Ascending aorta (tissue), 2 donors: ENCODE measurements at regions of chr3 and their contacts with region 1.

Region 1: GRCh38 chr3:132722164-132723024 is at the start of gene NPHP3:
- DNase-seq: peak; percentile 88 to 98
- H3K4me3 ChIP-seq: peak within 1 kb of the TSS; percentile 85 to 96
- H3K27ac ChIP-seq: peak within 1 kb of the TSS; percentile 93 to 97
- H3K4me1 ChIP-seq: peaks cover 6 to 17% of the 10 kb centered on the region in 2 donors
- H3K27me3 ChIP-seq: no peaks in the 10 kb centered on the region
- CTCF ChIP-seq: no peak
- total RNA-seq, gene NPHP3: 11.9 TPM

Region 2: GRCh38 chr3:132416807-132417694 is 305.3 kb before region 1 on chr3 and contains the start of gene DNAJC13:
- intact Hi-C with region 1: loop called (anchors 1 kb)
- DNase-seq: peak; percentile 73 to 96
- H3K4me3 ChIP-seq: peak within 1 kb of the TSS; percentile 79 to 98
- H3K27ac ChIP-seq: peak within 1 kb of the TSS; percentile 77 to 87
- H3K4me1 ChIP-seq: peaks cover 0 to 15% of the 10 kb centered on the region in 2 donors
- H3K27me3 ChIP-seq: no peaks in the 10 kb centered on the region
- CTCF ChIP-seq: no peak
- total RNA-seq, gene DNAJC13: 29.4 TPM

Region 3: GRCh38 chr3:132659365-132660051 is 62.9 kb before region 1 on chr3 and contains the start of gene ACAD11:
- intact Hi-C with region 1: loop called (anchors 1 kb)
- DNase-seq: peak; percentile 56 to 85
- H3K4me3 ChIP-seq: peak within 1 kb of the TSS; percentile 80 to 81
- H3K27ac ChIP-seq: peak within 1 kb of the TSS; percentile 95 to 98
- H3K4me1 ChIP-seq: peaks cover 0 to 19% of the 10 kb centered on the region in 2 donors
- H3K27me3 ChIP-seq: no peaks in the 10 kb centered on the region
- CTCF ChIP-seq: peak in 2 of 3 experiments; percentile 66 to 67
- total RNA-seq, gene ACAD11: 10.7 TPM

Region 4: GRCh38 chr3:132756108-132756650 is 33.8 kb after region 1 on chr3:
- intact Hi-C with region 1: no loop called
- DNase-seq: no peak
- H3K4me3 ChIP-seq: no peak overlapping the region
- H3K27ac ChIP-seq: no peak overlapping the region
- H3K4me1 ChIP-seq: no peaks in the 10 kb centered on the region
- H3K27me3 ChIP-seq: no peaks in the 10 kb centered on the region
- CTCF ChIP-seq: no peak

Region 5: DNA sequence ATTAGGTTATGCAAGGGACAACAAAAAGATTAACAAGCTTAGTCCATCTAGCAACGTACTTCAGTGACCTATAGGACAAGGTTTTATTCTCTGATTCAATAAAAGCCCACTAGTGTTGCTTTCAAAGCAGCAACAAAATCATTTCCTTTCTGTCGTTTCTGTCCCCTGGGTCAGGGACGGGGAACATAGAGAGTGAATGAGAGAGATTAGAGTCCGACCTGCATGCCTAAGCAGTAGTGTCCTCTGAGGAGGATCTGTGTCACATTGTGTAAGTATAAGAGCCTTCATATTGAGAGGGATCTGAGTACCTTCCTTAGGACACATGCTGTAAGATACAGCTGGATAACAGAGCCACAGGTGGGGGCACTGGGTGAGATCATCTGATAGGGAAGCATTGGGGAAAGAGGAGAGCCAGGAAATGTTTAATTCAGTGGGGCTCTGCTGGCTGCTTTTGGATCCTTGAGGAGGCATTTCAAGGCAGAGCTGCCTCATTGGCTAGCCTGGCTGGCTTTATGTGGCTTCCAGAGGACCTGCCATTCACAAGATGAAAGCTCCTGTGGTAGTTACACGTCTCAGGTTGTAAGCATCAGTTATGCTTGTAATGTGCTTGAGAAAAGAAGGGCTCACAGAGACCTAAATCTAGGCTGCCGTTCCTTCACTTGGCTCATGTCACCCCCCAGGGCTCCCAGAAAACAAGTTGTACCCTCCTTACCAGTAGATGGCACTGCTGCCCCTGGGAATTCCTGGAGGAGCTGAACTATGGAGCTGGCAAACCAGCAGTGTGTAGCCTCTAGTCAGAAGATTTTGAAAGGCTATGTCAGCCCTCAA is 318.5 kb after region 1 on chr3:
- intact Hi-C with region 1: loop called (anchors 1 kb)
- DNase-seq: peak in 1 of 2 donors; percentile 76
- H3K4me3 ChIP-seq: no peak overlapping the region
- H3K27ac ChIP-seq: peak overlapping the region in 1 of 2 donors; percentile 8
- H3K4me1 ChIP-seq: peaks cover 0 to 2% of the 10 kb centered on the region in 2 donors
- H3K27me3 ChIP-seq: no peaks in the 10 kb centered on the region
- CTCF ChIP-seq: peak; percentile 41 to 73 (median 46)

Region 6: DNA sequence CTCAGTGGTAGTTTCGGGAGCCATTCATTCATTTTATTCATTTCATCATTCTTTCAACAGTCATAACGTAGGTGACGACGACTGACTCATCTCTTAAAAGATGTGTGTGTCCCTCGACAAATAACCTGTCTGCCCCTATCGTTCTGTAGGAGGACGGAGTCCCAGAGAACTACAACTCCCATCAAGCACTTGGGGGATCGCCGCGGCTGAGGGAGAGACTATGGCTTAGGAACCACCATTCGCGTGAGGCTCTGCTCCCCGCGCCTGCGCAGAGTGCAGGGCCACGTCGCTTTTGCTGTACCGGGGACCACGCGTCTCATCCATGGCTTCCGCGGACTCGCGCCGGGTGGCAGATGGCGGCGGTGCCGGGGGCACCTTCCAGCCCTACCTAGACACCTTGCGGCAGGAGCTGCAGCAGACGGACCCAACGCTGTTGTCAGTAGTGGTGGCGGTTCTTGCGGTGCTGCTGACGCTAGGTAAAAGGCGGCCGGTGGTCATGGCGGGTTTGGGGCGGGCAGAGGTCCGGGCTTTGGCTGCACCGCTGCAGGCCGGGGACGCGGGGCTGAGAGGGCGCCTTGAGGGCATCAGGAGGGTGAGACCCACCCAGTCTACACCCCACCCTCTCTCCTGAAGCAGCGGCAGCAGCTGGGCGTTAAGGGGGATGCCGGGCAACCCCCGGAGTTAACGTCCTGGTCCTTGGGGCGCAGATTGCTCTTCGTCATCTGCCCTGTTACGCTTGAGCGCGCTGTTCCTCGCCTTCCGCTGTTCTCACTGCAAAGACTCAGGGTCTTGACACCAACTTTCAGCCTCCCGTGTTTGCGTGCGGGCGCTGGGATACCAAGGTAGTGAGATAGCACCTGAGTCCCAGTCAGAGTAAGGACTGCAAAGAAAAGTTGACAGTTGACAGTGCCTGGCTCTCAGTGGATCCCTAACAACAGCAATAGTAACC is 1083.4 kb after region 1 on chr3 and contains the start of gene SRPRB:
- intact Hi-C with region 1: loop called (anchors 5 kb)
- DNase-seq: peak; percentile 76 to 97
- H3K4me3 ChIP-seq: peak within 1 kb of the TSS; percentile 87
- H3K27ac ChIP-seq: peak within 1 kb of the TSS; percentile 54 to 58
- H3K4me1 ChIP-seq: peaks cover 0 to 3% of the 10 kb centered on the region in 2 donors
- H3K27me3 ChIP-seq: no peaks in the 10 kb centered on the region
- CTCF ChIP-seq: no peak
- total RNA-seq, gene SRPRB: 16.1 TPM

Region 7: GRCh38 chr3:134485718-134486576 is 1763.6 kb after region 1 on chr3 and contains the starts of genes ANAPC13 and CEP63:
- intact Hi-C with region 1: loop called (anchors 2 kb)
- DNase-seq: peak; percentile 80 to 98
- H3K4me3 ChIP-seq: peak within 1 kb of the TSS; percentile 78 to 92
- H3K27ac ChIP-seq: peak within 1 kb of the TSS; percentile 95 to 98
- H3K4me1 ChIP-seq: peaks cover 26 to 38% of the 10 kb centered on the region in 2 donors
- H3K27me3 ChIP-seq: no peaks in the 10 kb centered on the region
- CTCF ChIP-seq: no peak
- total RNA-seq, gene ANAPC13: 17.0 TPM
- total RNA-seq, gene CEP63: 5.3 TPM